Activated CD4-positive, alpha-beta T cell treated with anti-CD3 and anti-CD28 coated beads for 36 hours (primary cell): ENCODE measurements at regions of chrX and their contacts with region 1.

Region 1: GRCh38 chrX:79096145-79096556 is 48.3 kb upstream of the GPR174 start:
- DNase-seq: no peak
- ATAC-seq: peak; percentile 20
- H3K4me3 Mint-ChIP-seq: peak overlapping the region; percentile 46
- H3K27ac Mint-ChIP-seq: peak overlapping the region; percentile 83
- H3K4me1 Mint-ChIP-seq: peaks cover 61% of the 10 kb centered on the region
- H3K27me3 Mint-ChIP-seq: no peaks in the 10 kb centered on the region

Region 2: DNA sequence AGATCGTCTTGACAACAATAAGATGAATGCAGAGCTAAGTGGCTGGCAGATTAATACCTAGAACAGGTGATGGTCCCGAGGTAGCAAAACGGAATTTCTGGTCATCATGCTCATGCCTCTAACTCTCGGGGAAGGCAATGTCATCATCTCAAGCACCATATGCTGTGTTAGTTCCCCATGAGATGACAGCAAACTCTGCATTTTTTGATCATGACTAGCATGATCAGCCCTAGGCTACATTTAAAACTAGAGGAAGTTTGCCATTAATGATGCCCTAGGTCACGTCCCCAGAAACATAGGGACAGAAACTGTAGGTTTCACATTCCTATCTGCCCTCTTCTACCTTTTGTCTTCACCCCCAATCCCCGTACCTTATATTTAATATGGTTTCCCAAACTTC is 337.1 kb before region 1 on chrX:
- CTCF ChIA-PET with region 1: no interaction called
- POLR2A ChIA-PET with region 1: no interaction called
- intact Hi-C with region 1: no loop called
- DNase-seq: no peak
- ATAC-seq: no peak
- H3K4me3 Mint-ChIP-seq: no peak overlapping the region
- H3K27ac Mint-ChIP-seq: no peak overlapping the region
- H3K4me1 Mint-ChIP-seq: peaks cover 3% of the 10 kb centered on the region
- H3K27me3 Mint-ChIP-seq: no peaks in the 10 kb centered on the region

Region 3: DNA sequence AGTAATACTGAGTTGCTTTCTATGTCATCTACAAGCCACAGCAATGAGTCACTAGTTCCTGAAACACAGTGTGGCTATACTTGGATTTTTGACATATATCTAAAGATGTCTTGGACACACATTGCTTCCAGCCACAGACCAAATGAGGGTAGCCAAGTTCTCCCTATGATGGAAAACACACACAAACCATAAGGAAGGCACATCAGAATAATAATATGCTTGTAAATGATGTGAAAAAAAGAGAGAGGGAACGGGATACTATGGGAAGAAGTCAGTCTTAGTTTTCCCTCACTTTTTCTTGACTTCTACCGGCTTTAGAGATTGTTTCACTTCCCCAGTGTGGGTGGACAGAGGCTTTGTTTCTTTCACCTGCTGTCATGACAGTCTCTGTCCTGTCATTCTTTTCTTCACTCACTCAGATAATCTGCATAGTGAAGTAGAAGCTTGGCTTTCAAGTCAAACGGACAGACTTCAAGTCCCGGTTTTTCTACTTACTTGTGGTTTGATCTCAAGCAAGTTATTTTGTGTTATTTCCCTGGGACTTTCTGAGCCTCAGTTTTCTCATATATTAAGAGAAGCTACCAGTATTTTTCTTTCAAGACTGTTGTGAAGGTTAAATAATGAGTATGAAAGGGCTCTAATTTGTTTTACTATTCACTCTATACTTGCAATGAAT is 116.2 kb before region 1 on chrX:
- CTCF ChIA-PET with region 1: no interaction called
- POLR2A ChIA-PET with region 1: no interaction called
- intact Hi-C with region 1: no loop called
- DNase-seq: peak; percentile 30
- ATAC-seq: peak; percentile 93
- H3K4me3 Mint-ChIP-seq: peak overlapping the region; percentile 60
- H3K27ac Mint-ChIP-seq: peak overlapping the region; percentile 94
- H3K4me1 Mint-ChIP-seq: peaks cover 20% of the 10 kb centered on the region
- H3K27me3 Mint-ChIP-seq: no peaks in the 10 kb centered on the region

Region 4: GRCh38 chrX:79140731-79141130 is 44.6 kb after region 1 on chrX:
- CTCF ChIA-PET with region 1: no interaction called
- POLR2A ChIA-PET with region 1: no interaction called
- intact Hi-C with region 1: loop called in 1 of 2 experiments (anchors 5 kb)
- DNase-seq: no peak
- ATAC-seq: no peak
- H3K4me3 Mint-ChIP-seq: no peak overlapping the region
- H3K27ac Mint-ChIP-seq: no peak overlapping the region
- H3K4me1 Mint-ChIP-seq: peaks cover 37% of the 10 kb centered on the region
- H3K27me3 Mint-ChIP-seq: no peaks in the 10 kb centered on the region

Region 5: GRCh38 chrX:79153348-79153747 is 57.2 kb after region 1 on chrX:
- CTCF ChIA-PET with region 1: interaction called, 5 read pairs
- POLR2A ChIA-PET with region 1: no interaction called
- intact Hi-C with region 1: loop called in 1 of 2 experiments (anchors 5 kb)
- DNase-seq: no peak
- ATAC-seq: no peak
- H3K4me3 Mint-ChIP-seq: peak overlapping the region; percentile 67
- H3K27ac Mint-ChIP-seq: peak overlapping the region; percentile 89
- H3K4me1 Mint-ChIP-seq: peaks cover 58% of the 10 kb centered on the region
- H3K27me3 Mint-ChIP-seq: no peaks in the 10 kb centered on the region

Region 6: DNA sequence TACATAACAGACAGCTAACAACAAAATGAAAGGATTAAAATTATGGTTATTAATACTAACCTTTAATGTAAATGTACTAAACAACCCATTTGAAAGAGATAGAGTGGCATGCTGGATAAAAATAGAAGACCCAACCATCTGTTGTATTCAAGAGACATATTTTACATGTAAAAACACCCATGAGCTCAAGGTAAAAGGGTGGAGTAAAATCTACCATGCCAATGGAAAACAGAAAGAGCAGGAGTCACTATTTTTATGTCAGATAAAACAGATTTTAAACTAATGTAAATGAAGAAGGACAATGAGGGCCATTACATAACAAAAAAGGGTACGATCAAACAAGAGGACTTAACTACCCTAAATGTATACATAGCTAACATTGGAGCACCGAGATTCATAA is 204.7 kb after region 1 on chrX:
- CTCF ChIA-PET with region 1: no interaction called
- POLR2A ChIA-PET with region 1: no interaction called
- intact Hi-C with region 1: no loop called
- DNase-seq: no peak
- ATAC-seq: no peak
- H3K4me3 Mint-ChIP-seq: no peak overlapping the region
- H3K27ac Mint-ChIP-seq: no peak overlapping the region
- H3K4me1 Mint-ChIP-seq: no peaks in the 10 kb centered on the region
- H3K27me3 Mint-ChIP-seq: no peaks in the 10 kb centered on the region